Ascending aorta (tissue), 2 donors: ENCODE measurements at regions of chr2 and their contacts with region 1.

Region 1: DNA sequence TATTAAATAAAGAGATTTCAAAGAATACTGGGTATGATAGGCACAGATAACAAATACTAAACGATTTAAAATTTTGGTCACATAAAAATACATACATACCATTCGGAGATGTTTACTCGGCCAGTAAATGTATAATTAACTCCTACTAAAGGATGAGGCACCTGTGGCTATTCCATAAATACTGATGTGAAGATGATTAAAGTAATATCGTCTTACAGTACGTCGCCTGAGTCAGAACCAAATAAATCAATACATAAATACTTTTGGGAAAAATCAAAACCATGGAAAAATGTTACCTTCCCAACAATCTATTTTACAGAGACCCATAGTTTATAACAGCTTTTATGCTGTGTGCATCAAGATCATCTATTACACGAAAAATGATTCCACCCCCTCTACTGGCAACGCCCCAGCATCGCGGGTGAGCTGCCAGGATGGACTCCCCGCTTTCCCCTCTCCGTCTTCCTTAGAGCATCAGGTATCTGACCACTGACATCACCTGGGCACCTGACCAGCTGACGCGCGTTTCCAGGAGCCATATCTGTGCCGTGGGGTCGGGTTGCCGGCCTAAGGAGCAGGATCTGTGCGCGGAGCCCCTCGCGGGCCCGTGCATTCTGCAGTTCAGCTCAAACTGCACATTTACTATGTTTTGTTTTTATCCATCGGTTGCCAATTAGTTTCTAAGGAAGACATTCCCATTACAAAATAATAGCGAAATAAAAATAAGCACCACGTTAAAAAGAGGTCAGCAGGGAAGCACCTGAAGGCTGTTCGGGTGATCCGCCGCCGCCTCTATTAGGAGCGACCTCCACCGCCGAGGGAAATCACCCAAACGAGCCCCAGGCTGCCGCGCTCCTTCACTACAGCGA is 901 bp downstream of the ICA1L start:
- DNase-seq: peak in 1 of 2 donors; percentile 78
- H3K4me3 ChIP-seq: peak overlapping the region; percentile 85 to 87
- H3K27ac ChIP-seq: peak overlapping the region; percentile 47 to 82
- H3K4me1 ChIP-seq: no peaks in the 10 kb centered on the region
- H3K27me3 ChIP-seq: no peaks in the 10 kb centered on the region
- CTCF ChIP-seq: peak; percentile 8 to 33 (median 11)

Region 2: DNA sequence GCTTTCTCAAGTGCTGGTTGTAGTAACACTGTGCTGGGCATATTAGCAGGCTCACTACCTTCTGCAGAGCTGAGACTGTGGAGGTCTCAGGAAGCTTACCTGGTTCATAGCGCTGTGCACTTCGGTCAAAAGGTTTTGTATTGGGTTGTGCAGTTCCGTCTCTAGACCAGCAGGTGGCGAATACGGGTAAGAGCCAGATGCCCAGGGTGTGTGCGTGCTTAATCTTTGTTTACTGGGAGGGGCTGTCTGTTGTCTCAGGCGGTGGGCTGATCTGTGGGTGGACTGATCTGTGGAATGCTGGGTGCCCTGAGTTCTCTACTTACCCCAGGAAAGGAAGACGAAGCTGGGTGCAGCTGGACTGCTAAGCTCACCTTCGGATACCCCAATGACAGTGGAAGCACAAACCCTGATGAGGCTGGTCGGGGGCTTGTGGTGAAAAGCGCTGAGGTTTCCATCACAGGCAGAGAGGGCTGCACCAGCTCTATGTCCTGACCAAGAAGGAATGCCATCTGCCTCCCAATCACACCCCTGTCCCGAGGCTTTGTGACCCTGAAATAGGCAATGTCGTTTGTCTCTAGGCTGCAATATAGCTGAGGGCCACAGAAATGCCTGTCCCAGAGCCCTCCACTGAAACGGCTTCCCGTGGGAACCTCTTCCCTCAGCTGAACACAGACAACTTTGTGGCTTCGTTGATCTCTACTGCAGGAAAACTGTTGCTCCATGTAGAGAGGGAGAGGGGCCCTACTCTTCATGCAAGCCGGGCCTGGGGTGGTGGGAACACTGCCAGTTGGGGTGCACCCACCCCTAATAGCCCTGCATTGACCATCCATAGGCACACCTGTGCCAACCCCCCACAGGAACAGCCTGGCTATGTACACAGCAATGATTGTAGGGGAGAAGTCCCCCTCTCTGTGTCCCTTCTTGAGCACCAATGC is 281.8 kb before region 1 on chr2:
- intact Hi-C with region 1: loop called (anchors 5 kb)
- DNase-seq: peak; percentile 18 to 82
- H3K4me3 ChIP-seq: peak overlapping the region; percentile 35 to 36
- H3K27ac ChIP-seq: no peak overlapping the region
- H3K4me1 ChIP-seq: peaks cover 0 to 7% of the 10 kb centered on the region in 2 donors
- H3K27me3 ChIP-seq: no peaks in the 10 kb centered on the region
- CTCF ChIP-seq: peak; percentile 79 to 94 (median 90)

Region 3: DNA sequence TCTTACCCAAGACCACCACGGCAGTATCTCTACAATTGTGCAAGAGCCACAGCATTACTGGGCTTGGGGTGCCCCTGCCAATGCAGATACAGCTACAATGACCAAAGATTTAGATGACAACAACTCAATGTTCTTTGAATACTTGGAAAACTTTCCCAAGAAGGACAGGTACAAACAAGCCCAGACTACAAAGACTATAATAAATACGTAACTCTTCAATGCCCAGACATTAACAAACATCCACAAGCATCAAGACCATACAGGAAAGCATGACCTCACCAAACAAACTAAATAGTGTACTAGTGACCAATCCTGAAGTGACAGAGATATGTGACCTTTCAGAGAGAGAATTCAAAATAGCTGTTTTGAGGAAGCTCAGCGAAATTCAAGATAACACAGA is 61.9 kb before region 1 on chr2:
- intact Hi-C with region 1: loop called (anchors 5 kb)
- DNase-seq: no peak
- H3K4me3 ChIP-seq: no peak overlapping the region
- H3K27ac ChIP-seq: peak overlapping the region in 1 of 2 donors; percentile 70
- H3K4me1 ChIP-seq: peaks cover 6 to 17% of the 10 kb centered on the region in 2 donors
- H3K27me3 ChIP-seq: no peaks in the 10 kb centered on the region
- CTCF ChIP-seq: no peak

Region 4: GRCh38 chr2:202848813-202849212 is 21.9 kb before region 1 on chr2:
- intact Hi-C with region 1: no loop called
- DNase-seq: no peak
- H3K4me3 ChIP-seq: no peak overlapping the region
- H3K27ac ChIP-seq: no peak overlapping the region
- H3K4me1 ChIP-seq: no peaks in the 10 kb centered on the region
- H3K27me3 ChIP-seq: no peaks in the 10 kb centered on the region
- CTCF ChIP-seq: no peak

Region 5: GRCh38 chr2:203035879-203036470 is 165.3 kb after region 1 on chr2:
- intact Hi-C with region 1: no loop called
- DNase-seq: no peak
- H3K4me3 ChIP-seq: peak overlapping the region in 1 of 2 donors; percentile 12
- H3K27ac ChIP-seq: peak overlapping the region; percentile 87 to 88
- H3K4me1 ChIP-seq: peaks cover 8 to 67% of the 10 kb centered on the region in 2 donors
- H3K27me3 ChIP-seq: no peaks in the 10 kb centered on the region
- CTCF ChIP-seq: no peak